ENCODE measurements at regions of chr3 and their contacts with region 1.

Region 1: GRCh38 chr3:5401002-5401401 is 213.5 kb downstream of the EDEM1 start:
- DNase-seq: no peak
- ATAC-seq: peak in 1 of 2 experiments; percentile 33; a peak in 2 of 6 replicates
- H3K4me3 ChIP-seq: no peak overlapping the region
- H3K27ac ChIP-seq: no peak overlapping the region
- H3K4me1 ChIP-seq: no peaks in the 10 kb centered on the region
- CTCF ChIP-seq: no peak
- EP300 ChIP-seq: no peak
- POLR2A ChIP-seq: no peak
- RAD21 ChIP-seq: no peak

Region 2: GRCh38 chr3:5317557-5317956 is 83.4 kb before region 1 on chr3:
- CTCF ChIA-PET with region 1: no interaction called
- POLR2A ChIA-PET with region 1: no interaction called
- DNase-seq: no peak
- ATAC-seq: no peak
- H3K4me3 ChIP-seq: no peak overlapping the region
- H3K27ac ChIP-seq: no peak overlapping the region
- H3K4me1 ChIP-seq: peaks cover 14% of the 10 kb centered on the region
- CTCF ChIP-seq: no peak
- EP300 ChIP-seq: no peak
- POLR2A ChIP-seq: no peak
- RAD21 ChIP-seq: no peak

Region 3: GRCh38 chr3:5426094-5426883 is 25.3 kb after region 1 on chr3:
- CTCF ChIA-PET with region 1: interaction called, 12 read pairs
- POLR2A ChIA-PET with region 1: no interaction called
- DNase-seq: peak; percentile 49 to 78
- ATAC-seq: peak; percentile 96 to 99
- H3K4me3 ChIP-seq: no peak overlapping the region
- H3K27ac ChIP-seq: 0 out of 6 replicates have a peak overlapping the region, but pooled peaks of 1 of the 2 experiments have one; percentile 13
- H3K4me1 ChIP-seq: no peaks in the 10 kb centered on the region
- CTCF ChIP-seq: peak; percentile 82
- EP300 ChIP-seq: no peak
- POLR2A ChIP-seq: no peak
- RAD21 ChIP-seq: peak; percentile 78 to 88

Region 4: GRCh38 chr3:5948084-5948483 is 547.1 kb after region 1 on chr3:
- CTCF ChIA-PET with region 1: no interaction called
- POLR2A ChIA-PET with region 1: no interaction called
- DNase-seq: no peak
- ATAC-seq: no peak
- H3K4me3 ChIP-seq: no peak overlapping the region
- H3K27ac ChIP-seq: no peak overlapping the region
- H3K4me1 ChIP-seq: no peaks in the 10 kb centered on the region
- CTCF ChIP-seq: no peak
- EP300 ChIP-seq: no peak
- POLR2A ChIP-seq: no peak
- RAD21 ChIP-seq: no peak